Posterior vena cava (tissue), 2 donors: ENCODE measurements at regions of chr1 and their contacts with region 1.

Region 1: DNA sequence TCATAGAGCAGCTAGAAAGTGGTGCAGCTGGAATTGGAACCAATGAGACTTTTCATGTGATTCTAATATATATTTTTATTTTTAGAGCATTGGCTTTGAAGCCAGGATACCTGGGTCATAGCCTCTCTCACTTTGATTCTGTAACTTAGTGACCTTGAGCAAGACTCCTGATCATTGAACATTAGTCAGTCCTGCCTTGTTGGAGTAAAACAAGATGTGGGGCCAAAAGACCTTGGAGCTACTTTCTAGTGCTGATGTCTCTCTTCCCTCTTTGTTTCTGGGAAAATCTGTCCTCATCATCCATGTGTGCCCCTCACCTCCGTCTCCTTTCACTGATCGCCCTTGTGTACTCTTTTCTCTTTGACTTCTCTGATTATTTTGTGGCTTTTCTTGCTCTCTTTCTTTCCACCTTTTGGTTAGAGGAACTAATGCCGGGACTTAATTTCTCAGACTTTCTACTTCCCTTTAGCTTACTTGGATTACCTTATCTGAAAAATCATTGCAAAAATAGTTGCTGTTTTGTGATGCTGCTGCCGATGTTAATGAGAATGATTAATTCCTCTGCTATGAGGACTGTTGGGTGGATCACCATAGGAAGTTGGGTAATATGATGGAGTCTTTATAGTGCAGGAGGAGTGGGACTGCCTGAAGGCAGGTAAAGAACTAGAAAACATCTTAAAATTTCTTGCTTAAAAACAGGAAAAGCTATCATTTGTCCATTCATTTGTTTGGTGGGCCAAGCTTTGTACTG is 72.0 kb downstream of the NOS1AP start:
- DNase-seq: no peak

Region 2: DNA sequence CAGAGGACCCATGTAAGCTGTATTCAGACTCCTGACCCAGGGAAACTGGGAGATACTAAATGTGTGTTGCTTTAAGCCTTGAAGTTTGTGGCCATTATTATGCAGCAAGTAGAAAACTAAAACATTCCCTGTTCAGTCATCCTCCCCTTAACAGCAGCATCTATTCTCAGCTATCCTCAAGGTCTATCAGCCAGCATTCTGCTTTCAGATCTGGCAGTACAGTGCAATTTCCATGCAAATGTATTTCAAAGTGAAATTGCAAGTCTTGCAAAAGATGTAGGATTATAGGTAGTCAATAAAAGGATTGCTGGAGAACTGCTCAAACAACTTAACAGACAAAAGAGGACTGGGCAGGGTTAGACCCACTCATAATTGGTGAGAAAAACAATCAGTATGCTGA is 39.4 kb after region 1 on chr1:
- intact Hi-C with region 1: loop called in 1 of 2 experiments (anchors 1 kb)
- DNase-seq: no peak

Region 3: DNA sequence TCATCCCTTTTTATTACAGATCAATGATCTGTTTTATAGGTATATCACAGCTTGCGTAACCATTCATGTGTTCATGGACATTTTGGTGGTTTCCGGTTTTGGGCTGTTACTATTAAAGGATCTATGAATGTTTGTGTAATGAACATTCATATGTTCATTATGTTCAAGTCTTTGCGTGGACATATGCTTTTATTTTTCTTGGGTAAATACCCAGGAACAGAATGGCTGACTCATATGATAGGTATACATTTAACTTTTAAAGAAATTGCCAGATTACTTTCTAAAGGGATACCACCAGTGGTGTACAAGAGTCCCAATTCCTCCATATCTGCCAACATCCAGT is 161.5 kb after region 1 on chr1:
- intact Hi-C with region 1: no loop called
- DNase-seq: no peak